HEK293 (cell line): ENCODE measurements at regions of chr12 and their contacts with region 1.

Region 1: DNA sequence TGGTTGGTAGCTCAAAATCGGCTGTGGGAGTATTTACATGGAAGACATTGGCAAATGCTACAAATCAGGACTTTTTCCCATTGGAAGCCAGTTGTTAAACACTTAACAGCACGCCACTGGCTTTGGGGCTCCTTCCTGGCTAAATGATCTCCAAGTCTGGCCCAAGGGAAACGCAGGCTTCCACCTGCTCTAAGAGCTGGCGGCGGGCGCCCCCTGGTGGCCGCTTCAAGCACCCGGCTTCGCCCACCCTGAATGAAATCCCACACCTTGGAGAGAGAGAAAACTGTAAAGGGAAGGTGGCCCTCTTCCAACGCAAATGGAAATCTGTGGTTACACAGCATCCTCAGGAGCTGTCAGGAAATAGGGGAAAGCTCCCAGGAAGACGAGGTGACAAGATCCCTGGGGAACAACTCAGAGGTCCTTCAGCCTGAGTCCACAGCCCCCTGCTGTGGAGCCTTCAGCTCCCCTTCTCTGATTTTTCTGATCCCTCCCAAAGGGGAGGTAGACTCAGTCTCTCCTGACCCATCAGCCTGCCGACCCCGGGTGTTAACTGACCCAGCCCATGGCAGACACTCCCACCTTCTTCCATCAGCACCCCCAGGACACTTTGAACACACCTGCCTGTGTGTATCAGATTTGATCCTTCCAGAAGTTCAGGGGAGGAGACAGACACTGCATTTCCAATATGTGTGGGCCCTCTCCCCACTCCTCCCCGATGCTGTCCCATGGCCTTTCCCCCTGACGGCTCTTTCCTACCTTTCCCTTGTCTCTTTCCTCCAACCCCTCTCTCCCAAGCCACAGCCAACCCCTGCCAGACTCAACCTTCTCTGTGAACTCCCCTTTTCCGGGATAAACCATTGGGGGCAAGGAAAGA is 15.4 kb downstream of the SELPLG start:
- H3K4me3 ChIP-seq: no peak overlapping the region
- H3K27ac ChIP-seq: no peak overlapping the region
- H3K4me1 ChIP-seq: no peaks in the 10 kb centered on the region
- CTCF ChIP-seq: peak; percentile 75

Region 2: DNA sequence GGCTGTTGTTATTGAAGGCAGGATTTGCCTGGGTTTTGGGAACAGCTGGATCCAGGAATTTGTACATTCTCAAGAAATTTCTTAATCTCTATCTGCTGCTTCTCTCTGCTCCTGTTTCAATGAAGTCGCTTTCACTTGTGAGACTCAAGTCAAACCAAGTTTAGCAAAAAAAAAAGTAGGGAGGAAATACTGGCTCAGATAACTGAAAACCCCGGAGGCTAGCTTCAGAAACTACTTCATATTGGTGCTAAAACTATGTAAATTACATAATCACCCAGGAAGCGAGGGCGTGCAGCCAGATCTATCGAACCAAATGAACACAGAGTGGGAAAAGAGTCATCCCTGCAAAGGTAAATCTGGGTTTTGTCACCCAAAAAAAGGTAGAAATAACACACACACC is 171.6 kb before region 1 on chr12:
- CTCF ChIA-PET with region 1: no interaction called
- POLR2A ChIA-PET with region 1: no interaction called
- H3K4me3 ChIP-seq: no peak overlapping the region
- H3K27ac ChIP-seq: no peak overlapping the region
- H3K4me1 ChIP-seq: no peaks in the 10 kb centered on the region
- CTCF ChIP-seq: no peak

Region 3: DNA sequence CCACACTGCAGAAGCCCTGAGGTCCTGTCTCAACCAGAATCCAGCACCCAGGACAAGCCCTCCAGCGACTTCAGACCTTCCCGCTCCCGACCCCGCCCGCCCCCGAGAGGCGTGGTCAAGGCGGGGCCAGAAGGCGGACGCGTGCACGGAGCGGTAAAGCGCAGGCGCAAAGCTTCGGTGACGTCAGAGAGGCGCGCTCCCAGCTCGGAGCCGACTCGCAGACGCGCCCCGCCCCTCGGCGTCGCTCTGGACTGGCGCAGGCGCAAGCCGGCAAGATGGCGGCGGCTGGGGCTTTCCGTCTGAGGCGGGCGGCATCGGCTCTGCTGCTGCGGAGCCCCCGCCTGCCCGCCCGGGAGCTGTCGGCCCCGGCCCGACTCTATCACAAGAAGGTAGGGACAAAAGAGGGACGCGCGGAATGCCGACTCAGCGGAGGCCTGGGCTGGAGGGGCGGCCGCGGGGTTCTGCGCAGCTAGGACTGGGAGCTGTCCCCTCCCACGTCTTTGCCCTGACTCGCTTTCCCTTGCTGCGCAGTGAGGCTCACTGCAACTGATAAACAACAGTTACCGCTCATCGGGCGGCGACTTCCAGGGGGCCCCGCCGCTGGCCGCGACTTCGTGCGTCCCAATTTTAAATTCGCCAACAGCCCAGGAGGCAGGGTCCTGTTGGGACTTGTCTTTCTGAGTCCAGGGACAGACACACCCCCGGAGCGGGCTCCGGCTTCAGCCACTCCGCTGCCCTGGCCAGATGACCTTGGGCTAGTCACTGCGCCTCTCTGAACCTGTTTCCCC is 55.8 kb before region 1 on chr12 and contains the start of gene ISCU:
- CTCF ChIA-PET with region 1: interaction called, 160 read pairs
- POLR2A ChIA-PET with region 1: interaction called, 3 read pairs
- H3K4me3 ChIP-seq: peak within 1 kb of the TSS; percentile 97
- H3K27ac ChIP-seq: peak within 1 kb of the TSS; percentile 77
- H3K4me1 ChIP-seq: 0 out of 2 replicates have a peak, but pooled peaks cover 2% of the 10 kb centered on the region
- CTCF ChIP-seq: no peak

Region 4: GRCh38 chr12:108576660-108577234 is 41.6 kb before region 1 on chr12:
- CTCF ChIA-PET with region 1: interaction called, 160 read pairs
- POLR2A ChIA-PET with region 1: no interaction called
- H3K4me3 ChIP-seq: no peak overlapping the region
- H3K27ac ChIP-seq: no peak overlapping the region
- H3K4me1 ChIP-seq: no peaks in the 10 kb centered on the region
- CTCF ChIP-seq: no peak

Region 5: GRCh38 chr12:108595711-108596647 is 22.3 kb before region 1 on chr12:
- CTCF ChIA-PET with region 1: interaction called, 15 read pairs
- POLR2A ChIA-PET with region 1: interaction called, 3 read pairs
- H3K4me3 ChIP-seq: no peak overlapping the region
- H3K27ac ChIP-seq: no peak overlapping the region
- H3K4me1 ChIP-seq: no peaks in the 10 kb centered on the region
- CTCF ChIP-seq: no peak

Region 6: GRCh38 chr12:108633534-108634248 is 15.4 kb after region 1 on chr12 and contains the start of gene SELPLG:
- CTCF ChIA-PET with region 1: interaction called, 35 read pairs
- POLR2A ChIA-PET with region 1: no interaction called
- H3K4me3 ChIP-seq: no peak within 1 kb of the TSS
- H3K27ac ChIP-seq: no peak within 1 kb of the TSS
- H3K4me1 ChIP-seq: no peaks in the 10 kb centered on the region; the same call in 1 of the 2 replicates
- CTCF ChIP-seq: no peak

Region 7: DNA sequence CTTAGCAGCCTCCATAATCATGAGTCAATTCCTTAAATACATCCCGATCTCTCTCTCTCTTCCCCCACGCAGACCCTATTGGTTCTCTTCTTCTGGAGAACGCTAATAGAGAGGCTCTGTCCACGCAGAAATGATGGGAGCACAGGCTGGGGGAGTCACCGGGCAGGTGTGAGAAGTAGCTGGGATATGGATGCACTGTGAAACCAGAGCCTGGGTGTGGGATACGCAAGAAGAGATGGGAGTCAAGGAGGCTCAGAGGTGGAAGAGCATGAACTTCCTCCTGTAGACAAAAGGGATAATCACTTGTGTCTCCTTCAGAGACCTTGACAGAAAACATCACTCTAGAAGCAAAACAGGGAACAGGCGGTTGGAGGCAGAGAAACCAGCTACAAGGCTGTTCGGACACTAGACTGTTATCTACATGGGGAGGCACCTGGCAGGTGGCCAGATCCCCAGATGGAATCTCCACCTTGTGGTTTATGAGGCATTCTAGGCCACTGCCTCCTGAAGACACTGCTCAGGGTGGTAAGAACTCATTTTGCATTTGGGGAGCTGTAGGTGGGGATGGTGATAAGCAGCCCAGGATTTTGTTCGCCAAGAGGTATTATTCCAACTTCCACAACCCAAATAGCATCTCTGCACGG is 22.6 kb after region 1 on chr12:
- CTCF ChIA-PET with region 1: interaction called, 35 read pairs
- POLR2A ChIA-PET with region 1: no interaction called
- H3K4me3 ChIP-seq: no peak overlapping the region
- H3K27ac ChIP-seq: no peak overlapping the region
- H3K4me1 ChIP-seq: no peaks in the 10 kb centered on the region
- CTCF ChIP-seq: 0 out of 2 replicates have a peak, but pooled peaks have one; percentile 29

Region 8: DNA sequence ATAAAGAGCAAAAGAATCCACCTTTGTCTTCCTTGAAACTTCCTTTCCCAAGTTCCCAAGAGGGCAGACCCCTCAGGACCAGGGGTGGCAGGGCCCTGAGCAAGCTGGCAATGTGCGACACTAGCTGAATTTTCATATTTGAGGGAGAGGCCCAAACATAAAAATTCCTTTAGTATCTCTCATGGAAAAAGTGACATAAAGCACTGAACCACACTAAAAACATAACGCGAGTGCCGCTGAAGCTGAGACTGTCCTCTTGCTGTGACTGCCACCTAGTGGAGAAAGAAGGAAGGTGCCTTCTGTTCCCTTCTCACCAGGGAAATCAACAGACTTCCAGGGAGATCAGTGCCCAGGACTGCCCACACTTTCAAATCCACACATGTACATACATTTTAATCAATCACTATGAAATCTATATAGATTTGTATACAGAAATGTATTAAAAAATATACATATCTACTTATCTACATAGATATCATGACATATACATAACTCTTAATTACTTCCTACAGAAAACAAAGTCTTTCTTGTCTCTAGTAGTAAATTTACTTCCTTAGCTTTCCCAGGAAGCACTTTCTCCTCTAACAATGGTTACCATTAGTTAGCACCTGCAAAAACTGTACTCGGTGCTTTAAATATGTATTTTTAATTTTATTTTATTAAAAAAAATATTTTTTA is 185.3 kb after region 1 on chr12:
- CTCF ChIA-PET with region 1: interaction called, 12 read pairs
- POLR2A ChIA-PET with region 1: no interaction called
- H3K4me3 ChIP-seq: no peak overlapping the region
- H3K27ac ChIP-seq: no peak overlapping the region
- H3K4me1 ChIP-seq: no peaks in the 10 kb centered on the region
- CTCF ChIP-seq: peak; percentile 61